ENCODE measurements at regions of chr7 and their contacts with region 1.

Region 1: DNA sequence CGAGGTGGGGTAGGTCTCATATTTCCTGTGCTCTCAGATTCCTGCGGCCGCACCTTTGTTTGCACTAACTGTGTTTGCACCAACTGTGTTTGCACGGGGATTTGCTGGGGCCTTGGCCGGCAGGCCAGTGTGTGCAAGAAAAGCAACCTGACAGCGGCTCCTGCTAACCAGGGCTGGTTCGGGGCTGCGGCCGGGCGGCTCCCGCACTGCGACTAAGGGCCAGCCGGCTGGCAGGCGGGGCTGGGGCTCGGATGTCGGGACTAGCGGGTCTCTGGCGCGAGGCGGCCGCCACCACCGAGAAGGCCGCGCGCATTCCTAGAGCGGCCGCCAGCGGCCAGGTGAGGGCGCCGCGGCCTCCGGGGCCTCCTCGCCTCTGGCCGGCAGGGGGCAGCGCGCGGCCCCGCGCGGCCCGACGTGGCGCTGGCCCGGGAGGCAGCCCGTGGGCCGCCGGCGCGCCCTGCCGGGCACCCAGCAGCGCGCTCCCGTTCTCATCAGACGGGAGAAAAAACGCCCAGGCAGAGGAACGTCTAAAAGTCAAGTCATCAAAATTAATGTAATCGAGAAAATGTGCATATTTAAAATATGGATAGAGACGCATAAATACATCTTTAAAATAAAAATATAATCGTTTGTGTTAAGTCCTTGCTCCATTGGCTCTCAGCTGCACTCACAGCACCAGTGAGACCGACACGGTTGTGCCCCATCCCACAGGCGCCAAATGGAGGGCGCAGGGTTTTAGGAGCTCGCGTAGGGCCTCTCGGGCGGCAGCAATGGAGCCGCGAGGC is 38.5 kb downstream of the ZNF777 start:
- DNase-seq: peak; percentile 31 to 62 (median 51)
- H3K4me3 ChIP-seq: peak overlapping the region in 3 of 4 donors; percentile 26 to 60 (median 30)
- H3K27ac ChIP-seq: peak overlapping the region in 4 of 5 donors; percentile 34 to 78 (median 54)
- H3K4me1 ChIP-seq: peaks cover 7 to 13% of the 10 kb centered on the region in 2 donors
- H3K27me3 ChIP-seq: no peaks in the 10 kb centered on the region
- CTCF ChIP-seq: peak in 4 of 6 experiments; percentile 10 to 87 (median 60)
- POLR2A ChIP-seq: peak in 1 of 2 donors; percentile 18

Region 2: GRCh38 chr7:149459540-149460452 is 37.5 kb after region 1 on chr7:
- intact Hi-C with region 1: loop called in 1 of 2 experiments (anchors 5 kb)
- DNase-seq: peak in 3 of 7 donors; percentile 18 to 29 (median 22)
- H3K4me3 ChIP-seq: peak overlapping the region in 2 of 4 donors; percentile 19 to 86
- H3K27ac ChIP-seq: peak overlapping the region in 3 of 5 donors; percentile 17 to 81 (median 79)
- H3K4me1 ChIP-seq: peaks cover 8 to 24% of the 10 kb centered on the region in 2 donors
- H3K27me3 ChIP-seq: no peaks in the 10 kb centered on the region
- CTCF ChIP-seq: no peak
- POLR2A ChIP-seq: no peak

Region 3: GRCh38 chr7:149509774-149510173 is 87.5 kb after region 1 on chr7:
- intact Hi-C with region 1: no loop called
- DNase-seq: no peak
- H3K4me3 ChIP-seq: no peak overlapping the region
- H3K27ac ChIP-seq: no peak overlapping the region
- H3K4me1 ChIP-seq: no peaks in the 10 kb centered on the region
- H3K27me3 ChIP-seq: no peaks in the 10 kb centered on the region
- CTCF ChIP-seq: no peak
- POLR2A ChIP-seq: no peak

Region 4: GRCh38 chr7:149547126-149547525 is 124.8 kb after region 1 on chr7:
- intact Hi-C with region 1: no loop called
- DNase-seq: no peak
- H3K4me3 ChIP-seq: no peak overlapping the region
- H3K27ac ChIP-seq: no peak overlapping the region
- H3K4me1 ChIP-seq: no peaks in the 10 kb centered on the region
- H3K27me3 ChIP-seq: no peaks in the 10 kb centered on the region
- CTCF ChIP-seq: no peak
- POLR2A ChIP-seq: no peak